Panc1 (cell line): ENCODE measurements at regions of chr12 and their contacts with region 1.

Region 1: GRCh38 chr12:46590991-46591703 is 218.6 kb upstream of the SLC38A2 start:
- DNase-seq: no peak
- ATAC-seq: peak; percentile 60
- H3K4me3 ChIP-seq: no peak overlapping the region
- H3K27ac ChIP-seq: peak overlapping the region; percentile 30; the same call in 1 of the 2 replicates
- H3K4me1 ChIP-seq: no peaks in the 10 kb centered on the region
- H3K27me3 ChIP-seq: no peaks in the 10 kb centered on the region
- CTCF ChIP-seq: no peak

Region 2: GRCh38 chr12:46292755-46293402 is 298.3 kb before region 1 on chr12:
- CTCF ChIA-PET with region 1: no interaction called
- POLR2A ChIA-PET with region 1: interaction called, 10 read pairs
- in situ Hi-C with region 1: no loop called
- intact Hi-C with region 1: no loop called
- DNase-seq: no peak
- ATAC-seq: no peak
- H3K4me3 ChIP-seq: no peak overlapping the region
- H3K27ac ChIP-seq: no peak overlapping the region
- H3K4me1 ChIP-seq: no peaks in the 10 kb centered on the region
- H3K27me3 ChIP-seq: no peaks in the 10 kb centered on the region
- CTCF ChIP-seq: peak; percentile 35

Region 3: GRCh38 chr12:46933947-46934346 is 342.8 kb after region 1 on chr12:
- CTCF ChIA-PET with region 1: no interaction called
- POLR2A ChIA-PET with region 1: no interaction called
- in situ Hi-C with region 1: no loop called
- intact Hi-C with region 1: no loop called
- DNase-seq: peak; percentile 56
- ATAC-seq: peak; percentile 92
- H3K4me3 ChIP-seq: no peak overlapping the region
- H3K27ac ChIP-seq: no peak overlapping the region
- H3K4me1 ChIP-seq: peaks cover 4% of the 10 kb centered on the region
- H3K27me3 ChIP-seq: no peaks in the 10 kb centered on the region
- CTCF ChIP-seq: peak; percentile 72; the same call in 1 of the 2 replicates